ENCODE measurements at regions of chr2 and their contacts with region 1.

Region 1: GRCh38 chr2:174078275-174078674 is 113.1 kb upstream of the SP3 start:
- DNase-seq: peak in 1 of 2 donors; percentile 15
- ATAC-seq: no peak
- H3K4me3 ChIP-seq: no peak overlapping the region
- H3K4me3 Mint-ChIP-seq: no peak overlapping the region
- H3K27ac ChIP-seq: no peak overlapping the region
- H3K27ac Mint-ChIP-seq: no peak overlapping the region
- H3K4me1 ChIP-seq: no peaks in the 10 kb centered on the region
- H3K4me1 Mint-ChIP-seq: no peaks in the 10 kb centered on the region
- H3K27me3 ChIP-seq: no peaks in the 10 kb centered on the region
- H3K27me3 Mint-ChIP-seq: no peaks in the 10 kb centered on the region
- CTCF ChIP-seq: peak; percentile 42

Region 2: DNA sequence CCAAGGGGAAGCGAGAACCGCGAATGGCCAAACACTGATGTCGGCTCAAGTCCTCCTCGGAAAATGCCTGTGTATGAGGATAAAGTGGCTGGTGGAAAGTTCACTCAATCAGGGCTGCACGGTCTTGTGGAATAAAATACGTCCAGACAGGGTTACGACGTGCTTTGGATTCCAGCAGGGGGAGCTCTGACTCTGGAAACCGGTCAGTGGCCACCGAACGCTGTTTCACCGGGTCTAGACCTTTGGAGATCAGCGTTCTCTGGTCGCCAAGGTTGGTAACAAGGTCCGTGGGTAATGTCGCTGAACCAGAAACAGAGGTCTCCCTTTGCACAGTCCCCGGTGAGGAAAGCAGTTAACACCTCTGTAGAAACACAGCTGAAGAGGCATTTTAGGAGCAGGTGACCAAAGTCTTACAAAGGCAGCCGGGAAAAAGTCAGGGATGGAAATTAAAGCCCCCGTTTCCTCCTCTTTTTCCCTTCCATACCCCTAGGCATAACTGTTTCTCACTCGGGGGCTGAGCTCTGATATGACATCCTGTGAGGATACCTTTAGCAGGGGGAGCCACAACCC is 675.8 kb before region 1 on chr2:
- intact Hi-C with region 1: loop called (anchors 5 kb)
- DNase-seq: peak; percentile 51 to 85
- ATAC-seq: peak; percentile 82 to 94 (median 82)
- H3K4me3 ChIP-seq: no peak overlapping the region
- H3K4me3 Mint-ChIP-seq: no peak overlapping the region
- H3K27ac ChIP-seq: no peak overlapping the region
- H3K27ac Mint-ChIP-seq: no peak overlapping the region
- H3K4me1 ChIP-seq: peaks cover 6% of the 10 kb centered on the region
- H3K4me1 Mint-ChIP-seq: peaks cover 4 to 6% of the 10 kb centered on the region in 2 donors
- H3K27me3 ChIP-seq: peaks cover 6% of the 10 kb centered on the region
- H3K27me3 Mint-ChIP-seq: peaks cover 49 to 52% of the 10 kb centered on the region in 2 donors
- CTCF ChIP-seq: peak; percentile 77

Region 3: DNA sequence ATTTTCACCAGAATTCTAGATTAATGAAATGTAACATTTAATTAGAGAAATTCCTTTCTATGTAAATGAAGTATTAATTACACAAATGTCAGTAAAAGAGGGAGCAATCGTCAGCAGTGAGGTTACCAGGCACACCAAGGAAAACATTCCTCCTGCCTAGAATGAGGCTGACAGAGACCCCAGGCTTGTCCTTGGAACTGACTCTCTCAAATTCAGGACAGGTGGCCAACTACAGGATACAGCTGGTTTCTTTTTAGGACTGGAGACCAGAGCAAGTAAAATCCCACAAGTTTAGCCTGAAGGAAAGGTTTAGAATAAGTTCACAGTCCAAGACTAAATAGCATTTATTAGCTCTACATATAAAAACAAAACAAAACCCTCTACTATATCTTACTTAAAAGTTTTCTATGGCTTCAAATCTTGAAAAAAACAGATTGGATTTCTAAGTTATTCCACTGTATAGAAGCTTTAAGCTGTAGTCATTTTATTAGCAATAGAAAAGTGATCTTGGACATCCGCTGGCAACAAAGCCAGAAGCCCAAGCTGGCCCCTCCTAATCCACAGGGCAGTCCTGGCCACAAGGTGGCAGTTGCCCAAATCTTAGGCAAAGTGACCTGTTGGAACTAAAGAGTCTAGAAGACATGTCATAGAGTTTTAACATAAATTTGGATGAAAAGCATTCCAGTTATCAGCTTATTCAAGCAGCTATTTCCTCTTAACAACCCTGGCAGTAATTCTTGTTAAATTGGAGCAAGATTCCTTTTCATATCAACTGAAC is 194.1 kb before region 1 on chr2:
- intact Hi-C with region 1: loop called (anchors 10 kb)
- DNase-seq: peak in 1 of 2 donors; percentile 57
- ATAC-seq: peak; percentile 54 to 74 (median 68)
- H3K4me3 ChIP-seq: no peak overlapping the region
- H3K4me3 Mint-ChIP-seq: no peak overlapping the region
- H3K27ac ChIP-seq: no peak overlapping the region
- H3K27ac Mint-ChIP-seq: no peak overlapping the region
- H3K4me1 ChIP-seq: no peaks in the 10 kb centered on the region
- H3K4me1 Mint-ChIP-seq: peaks cover 10 to 11% of the 10 kb centered on the region in 2 donors
- H3K27me3 ChIP-seq: peaks cover 1% of the 10 kb centered on the region
- H3K27me3 Mint-ChIP-seq: peaks cover 8 to 46% of the 10 kb centered on the region in 2 donors
- CTCF ChIP-seq: peak; percentile 42